Caco-2 (cell line): ENCODE measurements at regions of chr18 and their contacts with region 1.

Region 1: DNA sequence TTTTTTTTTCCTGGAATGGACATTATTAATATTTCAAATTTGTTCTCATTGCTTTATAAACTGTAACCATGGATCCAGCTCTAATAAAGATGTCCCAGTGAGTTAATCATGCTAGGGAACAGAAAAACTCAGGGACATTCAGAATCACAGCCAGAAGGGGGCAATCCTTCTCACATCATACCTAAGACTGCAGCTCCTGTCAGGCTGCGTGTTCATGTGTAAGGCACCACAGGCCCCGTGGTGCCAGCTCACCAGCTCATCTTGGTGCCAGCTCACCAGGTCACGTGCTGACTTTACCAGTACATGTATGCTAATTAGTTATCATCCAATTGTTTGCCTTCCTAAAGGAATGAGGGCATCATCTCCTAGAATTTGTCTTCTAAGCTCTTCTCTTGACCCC is 84.7 kb upstream of the NEDD4L start:
- DNase-seq: peak in 1 of 2 experiments; percentile 22
- H3K4me3 ChIP-seq: no peak overlapping the region
- H3K4me3 Mint-ChIP-seq: no peak overlapping the region
- H3K27ac Mint-ChIP-seq: no peak overlapping the region
- H3K4me1 ChIP-seq: no peaks in the 10 kb centered on the region
- H3K4me1 Mint-ChIP-seq: peaks cover 5% of the 10 kb centered on the region
- H3K27me3 ChIP-seq: no peaks in the 10 kb centered on the region
- H3K27me3 Mint-ChIP-seq: no peaks in the 10 kb centered on the region
- CTCF ChIP-seq: peak; percentile 28 to 43

Region 2: GRCh38 chr18:57754577-57755338 is 204.5 kb before region 1 on chr18:
- CTCF ChIA-PET with region 1: no interaction called
- POLR2A ChIA-PET with region 1: no interaction called
- intact Hi-C with region 1: no loop called
- DNase-seq: no peak
- H3K4me3 ChIP-seq: no peak overlapping the region
- H3K4me3 Mint-ChIP-seq: no peak overlapping the region
- H3K27ac Mint-ChIP-seq: no peak overlapping the region
- H3K4me1 ChIP-seq: no peaks in the 10 kb centered on the region
- H3K4me1 Mint-ChIP-seq: no peaks in the 10 kb centered on the region
- H3K27me3 ChIP-seq: no peaks in the 10 kb centered on the region
- H3K27me3 Mint-ChIP-seq: no peaks in the 10 kb centered on the region
- CTCF ChIP-seq: no peak

Region 3: GRCh38 chr18:57881818-57882413 is 77.4 kb before region 1 on chr18:
- CTCF ChIA-PET with region 1: no interaction called
- POLR2A ChIA-PET with region 1: no interaction called
- intact Hi-C with region 1: loop called (anchors 5 kb)
- DNase-seq: peak; percentile 56 to 65
- H3K4me3 ChIP-seq: no peak overlapping the region
- H3K4me3 Mint-ChIP-seq: no peak overlapping the region
- H3K27ac Mint-ChIP-seq: no peak overlapping the region
- H3K4me1 ChIP-seq: peaks cover 4% of the 10 kb centered on the region; the same call in 1 of the 2 replicates
- H3K4me1 Mint-ChIP-seq: no peaks in the 10 kb centered on the region
- H3K27me3 ChIP-seq: no peaks in the 10 kb centered on the region
- H3K27me3 Mint-ChIP-seq: no peaks in the 10 kb centered on the region
- CTCF ChIP-seq: peak; percentile 62 to 66

Region 4: GRCh38 chr18:58013241-58014211 is 54.2 kb after region 1 on chr18:
- CTCF ChIA-PET with region 1: interaction called, 3 read pairs
- POLR2A ChIA-PET with region 1: no interaction called
- intact Hi-C with region 1: loop called (anchors 1 kb)
- DNase-seq: peak; percentile 67 to 68
- H3K4me3 ChIP-seq: no peak overlapping the region
- H3K4me3 Mint-ChIP-seq: no peak overlapping the region
- H3K27ac Mint-ChIP-seq: peak overlapping the region; percentile 35
- H3K4me1 ChIP-seq: peaks cover 47% of the 10 kb centered on the region
- H3K4me1 Mint-ChIP-seq: peaks cover 6% of the 10 kb centered on the region
- H3K27me3 ChIP-seq: no peaks in the 10 kb centered on the region
- H3K27me3 Mint-ChIP-seq: no peaks in the 10 kb centered on the region
- CTCF ChIP-seq: no peak

Region 5: DNA sequence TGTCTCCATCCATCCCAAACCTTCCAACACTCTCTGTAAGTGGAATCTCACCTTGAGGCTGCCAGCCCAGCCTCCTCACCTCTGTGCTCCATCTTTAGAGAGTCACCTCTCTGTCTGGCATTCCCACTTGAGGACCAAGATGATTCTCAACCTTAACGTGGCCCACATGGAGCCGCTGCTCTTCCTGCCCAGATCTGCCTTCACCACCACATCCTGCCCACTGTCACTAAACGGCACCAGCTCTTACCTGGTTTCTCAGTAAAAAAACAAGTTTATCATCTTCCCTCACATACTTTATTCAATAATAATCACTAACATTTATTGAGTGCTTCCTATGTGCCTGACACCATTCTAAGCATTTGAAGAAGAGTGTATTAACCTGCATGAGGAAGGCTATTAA is 165.2 kb after region 1 on chr18:
- CTCF ChIA-PET with region 1: interaction called, 5 read pairs
- POLR2A ChIA-PET with region 1: no interaction called
- intact Hi-C with region 1: loop called (anchors 5 kb)
- DNase-seq: no peak
- H3K4me3 ChIP-seq: no peak overlapping the region
- H3K4me3 Mint-ChIP-seq: no peak overlapping the region
- H3K27ac Mint-ChIP-seq: no peak overlapping the region
- H3K4me1 ChIP-seq: no peaks in the 10 kb centered on the region
- H3K4me1 Mint-ChIP-seq: peaks cover 12% of the 10 kb centered on the region
- H3K27me3 ChIP-seq: no peaks in the 10 kb centered on the region
- H3K27me3 Mint-ChIP-seq: no peaks in the 10 kb centered on the region
- CTCF ChIP-seq: no peak